ENCODE measurements at regions of chr10 and their contacts with region 1.

Region 1: GRCh38 chr10:100943508-100943907 is 25.8 kb upstream of the SEMA4G start:
- DNase-seq: no peak
- H3K4me3 ChIP-seq: no peak overlapping the region
- H3K27ac ChIP-seq: no peak overlapping the region
- H3K27me3 ChIP-seq: no peaks in the 10 kb centered on the region
- CTCF ChIP-seq: no peak

Region 2: GRCh38 chr10:100923580-100923979 is 19.9 kb before region 1 on chr10:
- CTCF ChIA-PET with region 1: no interaction called
- POLR2A ChIA-PET with region 1: no interaction called
- DNase-seq: no peak
- H3K4me3 ChIP-seq: no peak overlapping the region
- H3K27ac ChIP-seq: no peak overlapping the region
- H3K27me3 ChIP-seq: no peaks in the 10 kb centered on the region
- CTCF ChIP-seq: no peak

Region 3: GRCh38 chr10:100969187-100970075 is 25.9 kb after region 1 on chr10 and contains the start of gene SEMA4G:
- CTCF ChIA-PET with region 1: interaction called, 10 read pairs
- POLR2A ChIA-PET with region 1: no interaction called
- DNase-seq: no peak
- H3K4me3 ChIP-seq: peak within 1 kb of the TSS; percentile 67
- H3K27ac ChIP-seq: peak within 1 kb of the TSS; percentile 21
- H3K27me3 ChIP-seq: no peaks in the 10 kb centered on the region
- CTCF ChIP-seq: peak; percentile 78
- polyA plus RNA-seq, gene SEMA4G: 10.5 and 14.4 TPM in 2 replicates

Measured in AG04450 (cell line).